Natural killer cell (primary cell): ENCODE measurements at regions of chr6 and their contacts with region 1.

Region 1: DNA sequence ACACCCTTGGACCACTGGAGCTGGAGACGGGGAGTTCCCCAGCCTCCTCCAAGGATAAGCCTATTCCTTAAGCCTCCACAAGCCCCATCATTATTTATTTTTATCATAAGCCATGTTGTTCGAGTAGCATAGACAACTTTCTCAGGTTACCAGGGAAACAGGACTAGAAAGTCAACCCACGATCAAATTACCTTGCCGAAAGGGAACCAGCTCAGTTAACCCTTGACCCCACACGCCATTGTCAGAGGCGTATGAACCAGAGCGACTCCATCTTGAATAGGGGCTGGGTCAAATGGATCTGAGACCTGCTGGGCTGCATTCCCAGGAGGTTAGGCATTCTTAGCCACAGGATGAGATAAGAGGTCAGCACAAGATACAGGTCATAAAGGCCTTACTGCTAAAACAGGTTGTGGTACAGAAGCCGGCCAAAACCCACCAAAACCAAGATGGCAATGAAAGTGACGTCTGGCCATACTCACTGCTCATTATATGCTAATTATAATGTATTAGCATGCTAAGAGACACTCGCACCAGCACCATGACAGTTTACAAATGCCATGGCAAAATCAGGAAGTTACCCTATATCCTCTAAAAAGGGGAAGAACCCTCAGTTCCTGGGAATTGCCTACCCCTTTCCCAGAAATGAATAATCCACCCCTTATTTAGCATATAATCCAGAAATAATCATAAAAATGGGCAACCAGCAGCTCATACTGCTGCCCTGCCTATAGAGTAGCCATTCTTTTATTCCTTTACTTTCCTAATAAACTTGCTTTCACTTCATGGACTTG is 22.4 kb downstream of the SYNJ2 start:
- DNase-seq: no peak
- ATAC-seq: no peak
- H3K4me3 ChIP-seq: no peak overlapping the region
- H3K4me3 Mint-ChIP-seq: no peak overlapping the region
- H3K27ac ChIP-seq: no peak overlapping the region
- H3K27ac Mint-ChIP-seq: peak overlapping the region; percentile 77 to 79
- H3K4me1 ChIP-seq: peaks cover 28% of the 10 kb centered on the region
- H3K4me1 Mint-ChIP-seq: peaks cover 64 to 81% of the 10 kb centered on the region in 2 donors
- H3K27me3 ChIP-seq: no peaks in the 10 kb centered on the region
- H3K27me3 Mint-ChIP-seq: no peaks in the 10 kb centered on the region
- CTCF ChIP-seq: no peak

Region 2: DNA sequence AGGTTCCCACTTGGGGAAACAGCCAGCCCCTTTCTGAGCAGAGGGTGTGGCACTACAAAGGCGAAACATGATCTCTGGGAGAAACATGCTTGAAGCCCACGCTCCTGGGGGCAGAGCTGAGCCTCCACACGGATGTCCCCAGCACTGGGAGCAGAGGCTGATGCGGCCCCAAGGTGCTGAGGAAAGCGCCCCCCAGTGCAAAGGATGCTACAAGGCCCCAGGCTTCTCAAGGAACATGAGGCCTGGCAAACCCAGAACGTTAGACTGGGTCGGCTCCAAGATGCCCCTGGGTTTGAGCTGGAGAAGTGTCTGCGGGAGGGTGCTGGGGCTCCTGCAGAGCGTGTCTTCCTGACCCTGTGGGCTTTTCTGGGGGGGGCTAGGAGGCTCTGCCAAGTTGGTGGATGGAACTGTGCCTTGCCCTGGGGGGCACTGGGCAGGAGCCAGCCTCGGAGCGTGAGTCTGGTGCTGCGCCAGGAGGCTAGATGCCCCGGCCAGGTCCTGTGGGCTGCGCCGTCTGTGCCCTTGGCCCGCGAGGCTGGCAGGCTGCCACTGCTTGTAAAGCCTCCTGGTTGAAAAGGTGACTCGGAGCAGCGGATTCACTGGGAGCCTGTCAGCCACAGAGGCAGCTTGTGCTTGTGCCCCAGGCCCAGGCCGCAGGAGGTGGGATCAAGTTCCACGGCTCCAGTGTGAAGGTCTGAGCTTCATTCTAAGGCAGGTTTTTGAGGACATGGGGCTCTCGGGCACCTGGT is 14.4 kb before region 1 on chr6:
- intact Hi-C with region 1: loop called (anchors 2 kb)
- DNase-seq: peak in 1 of 2 donors; percentile 17
- ATAC-seq: no peak
- H3K4me3 ChIP-seq: no peak overlapping the region
- H3K4me3 Mint-ChIP-seq: peak overlapping the region; percentile 87
- H3K27ac ChIP-seq: no peak overlapping the region
- H3K27ac Mint-ChIP-seq: peak overlapping the region; percentile 84 to 85
- H3K4me1 ChIP-seq: peaks cover 32% of the 10 kb centered on the region
- H3K4me1 Mint-ChIP-seq: peaks cover 51 to 57% of the 10 kb centered on the region in 2 donors
- H3K27me3 ChIP-seq: no peaks in the 10 kb centered on the region
- H3K27me3 Mint-ChIP-seq: no peaks in the 10 kb centered on the region
- CTCF ChIP-seq: no peak